Cardiac septum (tissue), 1 donor: ENCODE measurements at regions of chr1 and their contacts with region 1.

Region 1: DNA sequence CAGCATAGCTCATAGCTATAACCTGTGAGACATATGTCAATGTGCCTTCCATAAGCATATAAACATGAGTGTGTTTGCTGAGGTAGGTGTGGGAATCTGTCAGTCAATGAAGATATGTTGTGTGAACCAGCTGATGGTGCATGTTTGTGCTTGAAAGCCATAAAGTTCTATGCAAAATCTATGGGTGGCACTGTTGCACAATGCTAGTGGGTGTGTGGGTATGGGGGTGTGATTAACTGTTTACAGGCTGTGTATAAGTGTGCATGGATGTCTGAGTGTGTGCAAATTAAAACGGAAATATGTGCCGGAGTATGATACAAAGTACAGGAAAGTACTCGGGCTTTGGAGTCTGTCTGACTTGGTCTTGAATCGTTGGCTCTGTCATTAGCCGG is 1.0 kb upstream of the ATP2B4 start:
- DNase-seq: no peak

Region 2: GRCh38 chr1:203558064-203558760 is 67.4 kb before region 1 on chr1:
- intact Hi-C with region 1: loop called (anchors 1 kb)
- DNase-seq: no peak

Region 3: DNA sequence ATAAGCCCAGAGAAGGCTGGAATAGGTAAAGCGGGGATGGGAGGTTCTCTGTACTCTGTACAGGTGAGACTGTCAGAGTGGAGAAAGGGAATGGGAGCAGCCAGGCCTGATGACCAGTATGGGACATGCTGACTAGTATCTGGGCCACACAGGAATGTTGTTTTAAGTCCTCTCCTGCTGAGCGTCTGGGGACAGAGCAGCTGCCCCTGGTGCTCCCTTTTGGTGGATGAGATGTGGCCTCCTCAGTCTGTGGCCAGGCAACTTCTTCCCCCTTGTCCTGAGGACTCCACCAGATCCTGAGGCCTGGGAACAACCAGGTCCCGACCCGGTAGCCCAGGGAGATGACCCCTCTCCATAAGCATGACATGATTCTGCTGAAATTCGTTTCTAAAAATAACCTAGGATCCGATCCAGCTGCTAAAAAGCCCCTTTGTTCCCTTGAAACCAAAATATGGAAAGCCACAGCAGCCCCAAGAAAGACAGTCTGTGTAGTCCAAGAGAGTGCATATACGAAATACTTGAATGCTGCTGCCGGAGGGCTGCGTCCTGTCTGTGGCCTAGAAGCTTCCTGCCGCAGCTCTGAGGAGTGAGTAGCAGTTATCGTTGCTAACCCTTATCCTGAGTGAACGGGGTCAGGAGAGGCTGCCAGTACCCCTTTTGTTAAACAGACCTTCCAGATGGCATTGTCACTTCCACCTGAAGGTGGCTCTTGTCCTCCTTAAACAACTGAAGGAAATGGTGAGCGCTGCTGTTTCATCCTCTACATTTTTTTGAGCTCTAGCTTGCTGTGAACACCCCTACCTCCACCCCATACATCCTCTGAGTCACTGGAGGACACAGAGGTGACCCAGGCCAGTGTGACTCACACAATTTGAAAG is 48.2 kb after region 1 on chr1:
- intact Hi-C with region 1: loop called (anchors 2 kb)
- DNase-seq: no peak

Region 4: GRCh38 chr1:203702130-203702577 is 76.5 kb after region 1 on chr1:
- intact Hi-C with region 1: loop called (anchors 2 kb)
- DNase-seq: no peak